HepG2 (cell line): ENCODE measurements at regions of chr3 and their contacts with region 1.

Region 1: DNA sequence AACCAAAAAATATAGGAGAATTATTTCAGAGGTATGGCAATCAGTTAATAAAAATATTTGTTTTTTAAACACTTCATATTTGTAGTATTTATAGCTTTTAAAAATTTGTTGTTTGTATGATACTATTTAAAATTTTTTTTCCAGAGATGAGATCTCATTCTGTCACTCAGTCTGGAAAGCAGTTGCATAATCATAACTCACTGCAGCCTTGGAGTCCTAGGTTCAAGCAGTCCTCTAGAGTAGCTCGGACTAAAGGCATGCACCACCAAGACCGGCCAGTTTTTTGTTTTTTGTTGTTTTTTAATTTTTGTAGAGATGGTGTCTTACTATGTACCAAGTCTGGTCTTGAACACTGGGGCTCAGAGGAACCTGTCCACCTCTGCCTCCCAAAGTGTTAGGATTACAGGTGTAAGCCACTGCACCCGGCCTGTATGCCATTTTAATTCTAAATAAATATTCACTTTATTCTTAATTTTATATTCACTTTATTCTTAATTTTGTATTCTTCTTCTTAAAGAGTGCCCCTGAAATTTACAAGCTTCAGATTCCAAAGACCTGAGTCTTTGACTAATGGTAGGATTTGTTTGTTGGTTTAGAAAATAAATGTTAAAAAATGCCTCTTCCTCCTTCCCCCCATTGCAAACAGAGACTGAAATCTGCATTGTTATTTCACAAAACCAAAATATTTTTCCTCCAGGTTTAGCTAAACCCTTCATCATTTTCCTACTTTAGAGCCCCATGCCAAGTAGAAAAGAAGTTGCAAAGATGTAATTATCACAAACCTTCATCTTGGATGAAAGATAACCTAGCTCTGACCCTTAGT is 9.4 kb downstream of the TGFBR2 start:
- DNase-seq: no peak
- ATAC-seq: 0 out of 3 replicates have a peak, but pooled peaks have one; percentile 8
- H3K4me3 ChIP-seq: peak overlapping the region in 1 of 3 experiments; percentile 8; a peak in 2 of 6 replicates
- H3K27ac ChIP-seq: no peak overlapping the region
- H3K4me1 ChIP-seq: peaks cover 100% of the 10 kb centered on the region
- H3K27me3 ChIP-seq: no peaks in the 10 kb centered on the region; a peak in 1 of 5 replicates
- CTCF ChIP-seq: no peak
- EP300 ChIP-seq: no peak
- POLR2A ChIP-seq: no peak
- RAD21 ChIP-seq: no peak

Region 2: DNA sequence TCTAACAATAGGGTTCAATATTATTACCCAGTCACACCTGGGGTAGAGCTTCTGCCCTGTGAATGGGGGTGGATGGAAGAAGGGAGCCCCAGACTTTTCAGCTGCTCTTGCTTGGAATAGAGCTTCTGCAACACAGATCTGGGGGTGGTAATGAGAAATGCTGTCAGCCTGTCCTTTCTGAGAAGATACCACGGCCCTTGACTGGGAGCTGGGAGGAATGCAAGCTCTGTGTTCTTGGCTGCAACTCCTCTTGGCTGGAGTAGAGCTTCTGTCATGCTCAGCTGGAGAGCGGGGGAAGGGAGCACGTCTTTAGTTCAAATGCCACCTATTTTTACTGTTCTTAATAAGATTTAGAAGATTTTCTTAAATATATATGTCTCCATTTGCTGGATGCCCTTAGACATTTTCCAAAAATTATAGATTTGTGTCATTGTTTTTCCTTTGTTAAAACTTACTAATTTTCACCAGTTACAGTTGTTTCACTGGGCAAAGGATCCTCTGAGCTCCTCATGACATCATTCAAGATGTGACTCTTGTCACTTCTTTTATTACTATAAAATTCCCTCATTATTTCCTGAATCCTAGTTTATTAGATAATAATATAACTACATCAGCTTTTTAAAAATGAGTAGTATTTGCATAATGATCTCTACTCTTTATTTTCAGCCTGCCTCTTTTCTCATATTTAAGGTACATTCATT is 189.4 kb before region 1 on chr3:
- CTCF ChIA-PET with region 1: no interaction called
- POLR2A ChIA-PET with region 1: no interaction called
- in situ Hi-C with region 1: no loop called
- intact Hi-C with region 1: no loop called
- DNase-seq: no peak
- ATAC-seq: no peak
- H3K4me3 ChIP-seq: no peak overlapping the region
- H3K27ac ChIP-seq: no peak overlapping the region
- H3K4me1 ChIP-seq: no peaks in the 10 kb centered on the region
- H3K27me3 ChIP-seq: no peaks in the 10 kb centered on the region
- CTCF ChIP-seq: no peak
- EP300 ChIP-seq: no peak
- POLR2A ChIP-seq: no peak
- RAD21 ChIP-seq: no peak

Region 3: GRCh38 chr3:30693470-30694120 is 77.8 kb after region 1 on chr3:
- CTCF ChIA-PET with region 1: no interaction called
- POLR2A ChIA-PET with region 1: no interaction called
- in situ Hi-C with region 1: no loop called
- intact Hi-C with region 1: loop called (anchors 2 kb)
- DNase-seq: peak; percentile 62
- ATAC-seq: peak; percentile 69
- H3K4me3 ChIP-seq: no peak overlapping the region
- H3K27ac ChIP-seq: peak overlapping the region; percentile 15
- H3K4me1 ChIP-seq: peaks cover 48% of the 10 kb centered on the region
- H3K27me3 ChIP-seq: no peaks in the 10 kb centered on the region
- CTCF ChIP-seq: peak; percentile 73
- EP300 ChIP-seq: no peak
- POLR2A ChIP-seq: no peak; a peak in 1 of 4 replicates
- RAD21 ChIP-seq: peak; percentile 73